ENCODE measurements at regions of chr17 and their contacts with region 1.

Region 1: GRCh38 chr17:16568541-16569357 is at the start of gene ZNF287:
- DNase-seq: peak; percentile 89
- ATAC-seq: peak; percentile 97
- H3K4me3 Mint-ChIP-seq: peak within 1 kb of the TSS; percentile 88
- H3K27ac Mint-ChIP-seq: peak within 1 kb of the TSS; percentile 94
- H3K4me1 Mint-ChIP-seq: peaks cover 14% of the 10 kb centered on the region
- H3K27me3 Mint-ChIP-seq: no peaks in the 10 kb centered on the region
- CTCF ChIP-seq: no peak
- total RNA-seq, gene ZNF287: 14.3 and 15.4 TPM in 2 replicates

Region 2: GRCh38 chr17:16653209-16654041 is 84.7 kb after region 1 on chr17 and contains the start of gene ZNF624:
- CTCF ChIA-PET with region 1: no interaction called
- POLR2A ChIA-PET with region 1: no interaction called
- intact Hi-C with region 1: loop called (anchors 2 kb)
- DNase-seq: peak; percentile 82
- ATAC-seq: peak; percentile 96
- H3K4me3 Mint-ChIP-seq: peak within 1 kb of the TSS; percentile 88
- H3K27ac Mint-ChIP-seq: peak within 1 kb of the TSS; percentile 37
- H3K4me1 Mint-ChIP-seq: peaks cover 17% of the 10 kb centered on the region
- H3K27me3 Mint-ChIP-seq: no peaks in the 10 kb centered on the region
- CTCF ChIP-seq: no peak
- total RNA-seq, gene ZNF624: 6.3 and 6.9 TPM in 2 replicates

Region 3: GRCh38 chr17:16866436-16866835 is 297.7 kb after region 1 on chr17:
- CTCF ChIA-PET with region 1: no interaction called
- POLR2A ChIA-PET with region 1: no interaction called
- intact Hi-C with region 1: no loop called
- DNase-seq: no peak
- ATAC-seq: no peak
- H3K4me3 Mint-ChIP-seq: no peak overlapping the region
- H3K27ac Mint-ChIP-seq: no peak overlapping the region
- H3K4me1 Mint-ChIP-seq: no peaks in the 10 kb centered on the region
- H3K27me3 Mint-ChIP-seq: no peaks in the 10 kb centered on the region
- CTCF ChIP-seq: no peak

Measured in activated B cell treated with CpG ODN at 0.5 μM for 24 hours (primary cell).